Tibial artery (tissue), 4 donors: ENCODE measurements at regions of chr18 and their contacts with region 1.

Region 1: DNA sequence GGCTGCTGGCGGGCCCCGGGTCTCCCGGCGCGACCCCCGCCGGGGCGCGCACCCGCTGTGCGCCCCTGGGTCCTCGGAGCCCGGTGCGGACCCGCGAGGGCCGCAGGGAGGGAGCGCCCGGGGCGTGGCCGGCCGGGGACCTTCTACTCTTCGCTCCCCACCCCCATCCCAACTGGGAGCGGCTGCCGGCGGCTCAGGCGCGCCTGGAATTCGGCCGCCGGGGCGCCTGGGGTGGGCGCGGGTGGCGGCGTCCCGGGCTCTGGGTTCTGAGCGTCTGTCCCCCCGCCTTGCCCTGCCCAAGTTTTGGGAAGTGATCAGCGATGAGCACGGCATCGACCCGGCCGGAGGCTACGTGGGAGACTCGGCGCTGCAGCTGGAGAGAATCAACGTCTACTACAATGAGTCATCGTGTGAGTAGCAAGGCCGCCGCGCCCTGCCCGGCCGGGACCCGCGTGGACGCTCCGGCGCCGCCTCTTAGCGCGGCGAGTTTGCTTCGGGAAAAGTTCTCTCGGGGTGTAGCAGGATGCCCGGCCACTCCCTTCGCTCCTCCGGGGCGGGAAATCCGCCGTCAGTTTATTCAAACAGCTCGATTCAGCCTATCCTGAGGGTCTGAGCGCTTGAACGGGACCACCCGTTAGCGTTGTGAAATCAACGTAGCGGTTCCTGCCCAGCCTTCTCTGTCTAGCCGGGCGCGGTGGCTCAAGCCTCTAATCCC is 502 bp downstream of the TUBB6 start:
- DNase-seq: peak; percentile 89 to 94
- H3K4me3 ChIP-seq: peak overlapping the region; percentile 82 to 88
- H3K27ac ChIP-seq: peak overlapping the region; percentile 98
- H3K4me1 ChIP-seq: peaks cover 0 to 45% (median 30%) of the 10 kb centered on the region in 4 donors
- H3K27me3 ChIP-seq: no peaks in the 10 kb centered on the region
- CTCF ChIP-seq: no peak

Region 2: DNA sequence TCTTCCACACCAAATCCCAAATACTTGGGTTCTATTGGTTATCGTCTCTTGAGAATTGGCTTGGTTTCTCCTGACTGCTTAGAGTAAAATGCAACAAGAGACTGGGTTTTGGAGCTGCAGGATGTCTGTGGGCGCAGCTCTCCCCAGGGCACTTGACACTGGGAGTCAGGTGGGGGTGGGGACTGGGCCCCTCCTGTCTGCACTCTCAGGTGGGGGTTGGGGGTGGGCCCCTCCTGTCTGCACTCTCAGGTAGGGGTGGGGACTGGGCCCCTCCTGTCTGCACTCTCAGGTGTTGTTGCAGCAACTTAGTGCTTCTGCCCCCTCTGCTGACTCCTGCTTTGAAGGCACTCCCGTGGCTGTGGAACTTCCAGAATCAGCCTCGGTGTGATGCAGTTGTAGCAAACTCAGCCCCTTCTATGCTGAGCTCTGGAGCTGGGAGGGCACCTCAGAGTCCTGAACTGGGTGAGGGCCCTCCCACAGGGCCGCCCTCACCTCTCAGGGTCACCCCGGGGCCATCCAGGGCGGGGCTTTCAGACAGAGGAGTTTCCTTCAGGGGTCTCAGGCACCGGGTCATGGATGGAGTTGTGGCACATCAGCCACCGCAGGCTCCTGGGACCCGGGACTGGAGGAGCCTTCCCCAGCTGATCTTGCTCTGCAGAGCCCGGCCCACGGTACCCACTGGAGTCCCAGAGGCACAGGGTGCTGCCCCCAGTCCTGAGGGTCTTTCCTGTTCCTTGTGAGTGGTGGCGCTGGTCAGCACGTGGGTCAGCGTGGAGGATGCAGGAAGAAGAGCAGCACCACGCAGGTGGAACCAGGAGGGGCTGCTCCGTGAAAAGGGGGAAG is 77.3 kb before region 1 on chr18:
- intact Hi-C with region 1: no loop called
- DNase-seq: no peak
- H3K4me3 ChIP-seq: no peak overlapping the region
- H3K27ac ChIP-seq: no peak overlapping the region
- H3K4me1 ChIP-seq: no peaks in the 10 kb centered on the region
- H3K27me3 ChIP-seq: peaks cover 0 to 13% of the 10 kb centered on the region in 2 donors
- CTCF ChIP-seq: no peak

Region 3: GRCh38 chr18:12254136-12254829 is 54.3 kb before region 1 on chr18 and contains the start of gene CIDEA:
- intact Hi-C with region 1: no loop called
- DNase-seq: no peak
- H3K4me3 ChIP-seq: peak within 1 kb of the TSS; percentile 28 to 53
- H3K27ac ChIP-seq: no peak within 1 kb of the TSS
- H3K4me1 ChIP-seq: peaks cover 0 to 15% (median 13%) of the 10 kb centered on the region in 4 donors
- H3K27me3 ChIP-seq: peaks cover 0 to 38% of the 10 kb centered on the region in 2 donors
- CTCF ChIP-seq: no peak

Region 4: DNA sequence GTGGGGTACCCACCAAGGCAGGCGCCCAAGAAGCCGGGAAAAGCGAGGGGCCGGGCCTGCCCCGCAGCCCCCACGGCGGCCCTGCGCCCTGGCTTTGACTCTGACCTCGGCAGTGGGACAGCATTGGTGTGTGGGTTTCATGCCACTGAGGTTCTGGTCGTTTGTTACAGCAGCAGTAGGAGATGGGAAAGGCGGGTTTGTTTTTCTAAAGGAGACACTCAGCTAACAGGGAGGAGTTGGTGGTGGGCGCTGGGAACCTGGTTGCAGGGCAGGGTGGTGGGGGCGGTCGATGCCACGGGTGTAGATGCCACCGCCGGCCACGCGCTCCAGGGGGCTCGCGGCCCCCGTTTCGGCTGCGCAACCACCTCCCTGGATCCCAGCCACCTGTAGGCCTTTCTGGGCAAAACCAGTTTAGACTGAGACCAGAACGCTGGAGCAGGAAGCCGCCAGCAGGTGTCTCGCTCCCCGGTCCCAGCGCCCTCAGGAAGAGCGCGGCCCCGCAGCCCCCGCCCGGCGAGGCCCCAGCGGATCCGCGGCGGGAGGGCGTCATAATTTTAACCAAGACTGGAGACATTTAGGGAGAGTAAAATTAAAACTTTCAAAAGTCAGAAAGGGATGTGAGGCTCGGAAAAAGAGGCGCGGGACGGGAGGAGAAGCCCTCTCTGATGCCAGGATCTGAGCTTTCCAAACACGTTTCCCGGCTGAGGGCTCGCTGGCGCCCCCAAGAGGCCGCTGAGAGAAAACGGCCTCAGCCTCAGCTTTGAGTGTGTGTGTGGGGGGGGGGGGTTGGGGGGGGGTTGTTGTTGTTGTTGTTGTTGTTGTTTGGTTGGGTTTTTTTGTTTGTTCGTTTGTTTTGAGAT is 36.9 kb before region 1 on chr18:
- intact Hi-C with region 1: loop called (anchors 5 kb)
- DNase-seq: peak; percentile 44 to 86
- H3K4me3 ChIP-seq: peak overlapping the region; percentile 49 to 50
- H3K27ac ChIP-seq: peak overlapping the region; percentile 63 to 79
- H3K4me1 ChIP-seq: peaks cover 0 to 11% (median 4%) of the 10 kb centered on the region in 4 donors
- H3K27me3 ChIP-seq: no peaks in the 10 kb centered on the region
- CTCF ChIP-seq: peak; percentile 74 to 79

Region 5: GRCh38 chr18:12455496-12455895 is 147.0 kb after region 1 on chr18:
- intact Hi-C with region 1: no loop called
- DNase-seq: no peak
- H3K4me3 ChIP-seq: no peak overlapping the region
- H3K27ac ChIP-seq: no peak overlapping the region
- H3K4me1 ChIP-seq: no peaks in the 10 kb centered on the region
- H3K27me3 ChIP-seq: no peaks in the 10 kb centered on the region
- CTCF ChIP-seq: no peak